ENCODE measurements at regions of chr3 and their contacts with region 1.

Region 1: GRCh38 chr3:40524568-40525285 is at the start of gene ZNF621:
- DNase-seq: peak; percentile 84
- H3K4me3 Mint-ChIP-seq: peak within 1 kb of the TSS; percentile 97
- H3K27ac Mint-ChIP-seq: peak within 1 kb of the TSS; percentile 95
- H3K4me1 Mint-ChIP-seq: peaks cover 26% of the 10 kb centered on the region
- H3K27me3 Mint-ChIP-seq: no peaks in the 10 kb centered on the region
- total RNA-seq, gene ZNF621: 18.3 and 19.0 TPM in 2 replicates

Region 2: GRCh38 chr3:40309418-40309924 is 215.3 kb before region 1 on chr3 and contains the start of gene EIF1B:
- intact Hi-C with region 1: loop called (anchors 1 kb)
- DNase-seq: peak; percentile 98
- H3K4me3 Mint-ChIP-seq: peak within 1 kb of the TSS; percentile 96
- H3K27ac Mint-ChIP-seq: peak within 1 kb of the TSS; percentile 95
- H3K4me1 Mint-ChIP-seq: peaks cover 28% of the 10 kb centered on the region
- H3K27me3 Mint-ChIP-seq: no peaks in the 10 kb centered on the region
- total RNA-seq, gene EIF1B: 49.1 and 49.6 TPM in 2 replicates

Region 3: GRCh38 chr3:40329071-40329470 is 195.7 kb before region 1 on chr3:
- intact Hi-C with region 1: loop called (anchors 5 kb)
- DNase-seq: no peak
- H3K4me3 Mint-ChIP-seq: no peak overlapping the region
- H3K27ac Mint-ChIP-seq: no peak overlapping the region
- H3K4me1 Mint-ChIP-seq: no peaks in the 10 kb centered on the region
- H3K27me3 Mint-ChIP-seq: peaks cover 20% of the 10 kb centered on the region

Region 4: DNA sequence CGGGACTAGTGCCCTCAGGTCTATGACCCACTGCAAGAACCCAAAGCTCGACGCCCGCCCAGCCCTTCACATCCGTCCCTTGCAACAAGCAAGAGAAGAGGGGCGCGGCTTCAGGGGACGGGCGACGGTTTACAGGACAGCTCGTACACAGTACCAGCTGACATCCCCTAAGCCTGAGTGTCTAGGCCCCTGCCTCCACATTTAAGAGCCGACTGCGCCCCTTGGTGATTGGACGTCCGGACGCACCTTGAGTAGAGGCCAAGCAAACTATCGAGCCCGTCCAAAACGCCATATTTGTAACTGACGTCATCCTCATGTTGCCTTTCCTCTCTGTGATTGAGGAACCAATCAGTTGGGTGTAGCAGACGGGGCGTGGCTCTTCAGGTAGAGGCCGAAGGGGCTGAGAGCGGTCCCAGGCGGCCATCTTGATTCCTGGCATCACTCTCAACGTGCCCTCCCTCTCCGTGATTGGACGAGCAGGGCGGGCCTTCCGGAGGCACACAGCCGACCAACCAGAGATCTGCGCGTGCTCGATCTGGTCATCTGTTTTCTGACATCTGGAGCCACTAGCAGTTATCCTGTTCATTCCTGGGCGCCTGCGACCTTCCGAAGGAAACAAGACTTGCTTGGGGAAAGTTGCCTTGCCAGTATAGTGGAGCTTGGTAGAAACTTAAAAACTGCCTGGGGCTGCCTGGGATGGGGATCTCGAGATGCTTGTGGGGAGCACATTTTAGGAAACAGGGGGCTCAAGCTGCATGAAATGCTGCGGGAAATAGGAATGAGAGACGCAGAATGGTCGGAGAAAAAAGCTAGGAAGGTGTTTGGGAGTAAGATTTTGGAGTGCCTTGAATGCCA is 71.6 kb before region 1 on chr3:
- intact Hi-C with region 1: loop called (anchors 1 kb)
- DNase-seq: peak; percentile 95
- H3K4me3 Mint-ChIP-seq: peak overlapping the region; percentile 91
- H3K27ac Mint-ChIP-seq: peak overlapping the region; percentile 96
- H3K4me1 Mint-ChIP-seq: peaks cover 40% of the 10 kb centered on the region
- H3K27me3 Mint-ChIP-seq: no peaks in the 10 kb centered on the region

Region 5: GRCh38 chr3:40476478-40477470 is 48.0 kb before region 1 on chr3 and contains the start of gene ZNF619:
- intact Hi-C with region 1: loop called (anchors 1 kb)
- DNase-seq: peak; percentile 31
- H3K4me3 Mint-ChIP-seq: peak within 1 kb of the TSS; percentile 91
- H3K27ac Mint-ChIP-seq: peak within 1 kb of the TSS; percentile 78
- H3K4me1 Mint-ChIP-seq: peaks cover 27% of the 10 kb centered on the region
- H3K27me3 Mint-ChIP-seq: peaks cover 10% of the 10 kb centered on the region
- total RNA-seq, gene ZNF619: 7.1 and 8.2 TPM in 2 replicates

Region 6: DNA sequence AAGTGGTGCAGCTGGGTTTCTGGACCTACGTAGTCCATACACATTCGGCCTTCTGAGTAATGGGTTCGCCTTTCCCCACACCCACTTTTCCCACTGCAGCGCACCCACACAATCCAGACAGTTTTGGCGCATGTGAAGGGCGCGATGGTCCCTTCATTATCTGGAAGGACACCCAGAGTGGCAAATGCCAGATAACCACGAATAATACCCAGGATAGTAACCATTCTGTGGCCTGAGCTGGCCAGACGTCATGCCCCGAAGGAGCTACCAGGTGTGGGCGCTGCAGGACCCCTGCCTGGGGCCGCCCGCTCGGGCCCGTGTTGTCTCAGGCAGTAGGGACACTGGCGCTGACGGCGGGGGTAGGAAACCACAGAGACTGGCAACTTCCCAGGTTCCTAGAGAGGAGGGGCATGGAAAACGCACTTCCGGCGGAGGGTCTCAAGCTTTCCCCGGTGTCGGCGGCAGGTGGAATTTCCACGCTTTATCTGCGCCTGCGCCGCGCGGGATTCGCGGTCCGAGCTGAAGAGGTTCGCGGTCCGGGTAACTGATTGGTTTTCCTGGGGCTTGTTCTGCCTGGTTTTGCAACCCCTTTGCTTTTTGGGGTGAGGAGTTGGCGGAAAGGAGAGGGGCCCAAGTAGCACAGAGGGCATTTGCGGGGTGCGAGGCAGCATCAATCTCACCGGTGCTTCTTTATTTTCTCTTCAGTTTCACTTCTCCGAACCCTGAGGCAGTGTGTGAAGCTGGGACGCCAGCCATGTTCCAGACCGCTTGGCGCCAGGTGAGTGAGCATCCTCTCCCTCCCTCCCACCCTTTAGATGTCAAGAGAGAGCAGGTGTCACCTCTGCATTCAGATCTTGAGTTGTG is 18.9 kb before region 1 on chr3 and contains the start of gene ZNF620:
- intact Hi-C with region 1: loop called (anchors 1 kb)
- DNase-seq: peak; percentile 34
- H3K4me3 Mint-ChIP-seq: peak within 1 kb of the TSS; percentile 89
- H3K27ac Mint-ChIP-seq: peak within 1 kb of the TSS; percentile 47
- H3K4me1 Mint-ChIP-seq: peaks cover 20% of the 10 kb centered on the region
- H3K27me3 Mint-ChIP-seq: no peaks in the 10 kb centered on the region
- total RNA-seq, gene ZNF620: 5.5 and 6.0 TPM in 2 replicates

Region 7: DNA sequence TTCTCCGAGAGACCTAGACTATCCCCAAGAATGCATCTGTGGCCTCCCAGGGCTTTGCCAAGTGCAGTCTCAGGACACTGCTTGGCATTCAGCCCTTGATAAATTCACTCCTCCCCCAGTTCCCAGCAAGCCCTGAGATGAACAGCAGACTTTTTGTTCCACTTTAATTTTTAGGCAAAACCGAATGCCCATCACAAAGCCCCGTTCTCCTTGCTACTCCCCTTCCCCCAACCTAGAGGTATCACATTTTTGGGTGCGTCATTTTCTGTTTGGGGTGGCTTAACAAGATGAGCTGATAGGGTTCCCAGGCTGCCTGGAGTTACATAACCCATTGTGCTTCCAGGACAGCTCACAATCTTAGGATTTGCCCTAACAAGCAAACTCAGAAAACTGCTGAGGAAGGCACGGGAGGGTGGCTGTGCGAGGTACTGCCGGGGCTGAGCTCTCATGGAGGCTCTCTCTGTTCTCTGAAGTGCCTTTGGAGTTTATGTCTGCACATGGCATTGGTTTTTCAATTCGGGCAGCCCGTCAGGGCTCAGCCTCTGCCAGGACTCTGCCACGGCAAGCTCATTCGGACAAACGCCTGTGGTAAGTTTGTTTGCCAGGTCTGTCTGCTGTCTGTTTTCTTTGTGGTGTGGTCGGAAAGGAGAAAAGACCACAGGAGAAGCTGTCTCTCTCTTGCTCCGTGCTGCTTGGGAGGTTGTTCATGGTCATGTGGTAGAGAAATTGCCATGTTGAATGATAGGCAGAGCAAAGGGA is 1566.4 kb after region 1 on chr3 and contains the start of gene TRAK1:
- intact Hi-C with region 1: loop called (anchors 10 kb)
- DNase-seq: no peak
- H3K4me3 Mint-ChIP-seq: peak within 1 kb of the TSS; percentile 11
- H3K27ac Mint-ChIP-seq: peak within 1 kb of the TSS; percentile 64
- H3K4me1 Mint-ChIP-seq: peaks cover 53% of the 10 kb centered on the region
- H3K27me3 Mint-ChIP-seq: no peaks in the 10 kb centered on the region
- total RNA-seq, gene TRAK1: 32.6 and 33.8 TPM in 2 replicates